Activated B cell treated with CpG ODN at 0.5 μM for 24 hours (primary cell): ENCODE measurements at regions of chr1 and their contacts with region 1.

Region 1: GRCh38 chr1:109984456-109985275 is at the start of gene AHCYL1:
- DNase-seq: peak; percentile 97
- ATAC-seq: peak; percentile 99
- H3K4me3 Mint-ChIP-seq: peak within 1 kb of the TSS; percentile 98
- H3K27ac Mint-ChIP-seq: peak within 1 kb of the TSS; percentile 93
- H3K4me1 Mint-ChIP-seq: peaks cover 37% of the 10 kb centered on the region
- H3K27me3 Mint-ChIP-seq: peaks cover 5% of the 10 kb centered on the region
- CTCF ChIP-seq: peak; percentile 56
- total RNA-seq, gene AHCYL1: 40.5 and 41.6 TPM in 2 replicates

Region 2: GRCh38 chr1:109655601-109656519 is 328.8 kb before region 1 on chr1 and contains the start of gene GSTM4:
- CTCF ChIA-PET with region 1: interaction called, 9 read pairs
- POLR2A ChIA-PET with region 1: interaction called, 5 read pairs
- intact Hi-C with region 1: loop called (anchors 1 kb)
- DNase-seq: peak; percentile 82
- ATAC-seq: peak; percentile 97
- H3K4me3 Mint-ChIP-seq: peak within 1 kb of the TSS; percentile 96
- H3K27ac Mint-ChIP-seq: peak within 1 kb of the TSS; percentile 94
- H3K4me1 Mint-ChIP-seq: peaks cover 24% of the 10 kb centered on the region
- H3K27me3 Mint-ChIP-seq: peaks cover 10% of the 10 kb centered on the region
- CTCF ChIP-seq: no peak
- total RNA-seq, gene GSTM4: 13.1 and 13.7 TPM in 2 replicates

Region 3: GRCh38 chr1:109773146-109773899 is 211.3 kb before region 1 on chr1:
- CTCF ChIA-PET with region 1: interaction called, 379 read pairs
- POLR2A ChIA-PET with region 1: interaction called, 22 read pairs
- intact Hi-C with region 1: loop called (anchors 1 kb)
- DNase-seq: peak; percentile 37
- ATAC-seq: peak; percentile 81
- H3K4me3 Mint-ChIP-seq: no peak overlapping the region
- H3K27ac Mint-ChIP-seq: no peak overlapping the region
- H3K4me1 Mint-ChIP-seq: peaks cover 3% of the 10 kb centered on the region
- H3K27me3 Mint-ChIP-seq: peaks cover 12% of the 10 kb centered on the region
- CTCF ChIP-seq: no peak

Region 4: GRCh38 chr1:109886827-109887226 is 97.8 kb before region 1 on chr1:
- CTCF ChIA-PET with region 1: interaction called, 10 read pairs
- POLR2A ChIA-PET with region 1: no interaction called
- intact Hi-C with region 1: no loop called
- DNase-seq: no peak
- ATAC-seq: peak; percentile 92
- H3K4me3 Mint-ChIP-seq: peak overlapping the region; percentile 39
- H3K27ac Mint-ChIP-seq: peak overlapping the region; percentile 77
- H3K4me1 Mint-ChIP-seq: peaks cover 60% of the 10 kb centered on the region
- H3K27me3 Mint-ChIP-seq: peaks cover 15% of the 10 kb centered on the region
- CTCF ChIP-seq: no peak

Region 5: DNA sequence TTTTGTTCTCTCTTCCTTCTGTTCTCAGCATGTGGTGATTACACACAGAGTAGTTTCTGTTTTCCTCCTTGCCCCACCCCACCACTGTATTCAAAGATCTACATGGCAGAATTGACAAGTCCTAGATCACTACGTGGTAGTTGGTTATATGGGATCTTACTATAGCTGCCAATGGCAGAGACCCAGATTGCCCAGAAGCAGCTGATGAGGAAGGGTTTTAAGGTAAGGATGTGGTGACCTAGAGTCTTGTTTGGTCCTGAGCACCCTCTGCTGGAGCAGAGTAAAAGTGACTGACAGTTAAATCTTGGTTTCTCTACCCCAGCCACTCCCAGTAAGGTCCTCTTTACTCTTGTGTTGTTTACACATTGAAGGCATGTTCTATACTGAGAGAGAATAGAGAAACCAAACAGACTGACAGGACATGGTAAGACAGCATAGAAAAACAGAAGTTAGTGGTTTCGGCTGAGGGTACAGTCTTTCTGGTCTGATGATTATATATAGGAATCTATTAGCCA is 26.9 kb after region 1 on chr1:
- CTCF ChIA-PET with region 1: interaction called, 69 read pairs
- POLR2A ChIA-PET with region 1: interaction called, 18 read pairs
- intact Hi-C with region 1: loop called (anchors 1 kb)
- DNase-seq: no peak
- ATAC-seq: peak; percentile 90
- H3K4me3 Mint-ChIP-seq: peak overlapping the region; percentile 75
- H3K27ac Mint-ChIP-seq: peak overlapping the region; percentile 99
- H3K4me1 Mint-ChIP-seq: peaks cover 37% of the 10 kb centered on the region
- H3K27me3 Mint-ChIP-seq: no peaks in the 10 kb centered on the region
- CTCF ChIP-seq: peak; percentile 55